CD8-positive, alpha-beta T cell (primary cell): ENCODE measurements at regions of chr3 and their contacts with region 1.

Region 1: GRCh38 chr3:52231502-52232293 is 6.3 kb upstream of the TLR9 start:
- DNase-seq: peak; percentile 79 to 97 (median 89)
- ATAC-seq: peak; percentile 87
- H3K4me3 ChIP-seq: no peak overlapping the region
- H3K4me3 Mint-ChIP-seq: peak overlapping the region; percentile 42
- H3K27ac ChIP-seq: peak overlapping the region in 1 of 2 experiments; percentile 17
- H3K27ac Mint-ChIP-seq: peak overlapping the region; percentile 90
- H3K4me1 ChIP-seq: peaks cover 61% of the 10 kb centered on the region
- H3K4me1 Mint-ChIP-seq: peaks cover 64% of the 10 kb centered on the region
- H3K27me3 ChIP-seq: no peaks in the 10 kb centered on the region
- H3K27me3 Mint-ChIP-seq: no peaks in the 10 kb centered on the region
- CTCF ChIP-seq: peak; percentile 92

Region 2: DNA sequence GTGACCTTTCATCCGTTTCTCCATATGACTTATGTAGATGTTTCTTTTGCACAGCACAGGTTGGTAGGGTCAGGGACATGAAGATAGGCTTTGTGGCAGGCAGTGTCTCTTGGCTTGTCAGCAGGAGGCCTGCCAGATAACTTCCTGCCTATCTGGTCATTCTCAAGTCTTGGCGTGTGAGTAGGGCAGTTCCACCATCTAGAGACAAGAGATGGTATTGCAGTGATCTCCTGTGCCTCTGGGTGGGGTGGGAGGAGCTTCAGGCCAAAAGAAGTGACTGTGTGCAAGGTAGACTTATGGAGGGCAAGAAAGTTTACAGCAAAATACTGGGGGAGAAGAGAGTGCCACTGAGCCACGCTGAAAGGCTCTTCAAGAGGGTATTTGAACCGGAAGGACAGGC is 549.6 kb before region 1 on chr3:
- CTCF ChIA-PET with region 1: no interaction called
- POLR2A ChIA-PET with region 1: no interaction called
- intact Hi-C with region 1: no loop called
- DNase-seq: peak; percentile 59 to 93 (median 71)
- ATAC-seq: peak; percentile 86
- H3K4me3 ChIP-seq: peak overlapping the region; percentile 24 to 27
- H3K4me3 Mint-ChIP-seq: peak overlapping the region; percentile 72
- H3K27ac ChIP-seq: peak overlapping the region; percentile 17 to 64
- H3K27ac Mint-ChIP-seq: peak overlapping the region; percentile 52
- H3K4me1 ChIP-seq: peaks cover 96% of the 10 kb centered on the region
- H3K4me1 Mint-ChIP-seq: peaks cover 91% of the 10 kb centered on the region
- H3K27me3 ChIP-seq: no peaks in the 10 kb centered on the region
- H3K27me3 Mint-ChIP-seq: no peaks in the 10 kb centered on the region
- CTCF ChIP-seq: peak; percentile 85

Region 3: GRCh38 chr3:52253314-52254304 is 21.9 kb after region 1 on chr3:
- CTCF ChIA-PET with region 1: interaction called, 54 read pairs
- POLR2A ChIA-PET with region 1: interaction called, 160 read pairs
- intact Hi-C with region 1: no loop called
- DNase-seq: peak; percentile 70 to 97 (median 87)
- ATAC-seq: peak; percentile 86
- H3K4me3 ChIP-seq: peak overlapping the region; percentile 25 to 32
- H3K4me3 Mint-ChIP-seq: peak overlapping the region; percentile 84
- H3K27ac ChIP-seq: peak overlapping the region; percentile 76 to 92
- H3K27ac Mint-ChIP-seq: peak overlapping the region; percentile 100
- H3K4me1 ChIP-seq: peaks cover 96% of the 10 kb centered on the region
- H3K4me1 Mint-ChIP-seq: peaks cover 93% of the 10 kb centered on the region
- H3K27me3 ChIP-seq: no peaks in the 10 kb centered on the region
- H3K27me3 Mint-ChIP-seq: no peaks in the 10 kb centered on the region
- CTCF ChIP-seq: no peak

Region 4: GRCh38 chr3:52270252-52270754 is 38.6 kb after region 1 on chr3:
- CTCF ChIA-PET with region 1: interaction called, 622 read pairs
- POLR2A ChIA-PET with region 1: interaction called, 685 read pairs
- intact Hi-C with region 1: no loop called
- DNase-seq: no peak
- ATAC-seq: no peak
- H3K4me3 ChIP-seq: peak overlapping the region in 1 of 2 experiments; percentile 10
- H3K4me3 Mint-ChIP-seq: peak overlapping the region; percentile 82
- H3K27ac ChIP-seq: peak overlapping the region; percentile 34 to 68
- H3K27ac Mint-ChIP-seq: peak overlapping the region; percentile 95
- H3K4me1 ChIP-seq: peaks cover 73% of the 10 kb centered on the region
- H3K4me1 Mint-ChIP-seq: peaks cover 86% of the 10 kb centered on the region
- H3K27me3 ChIP-seq: no peaks in the 10 kb centered on the region
- H3K27me3 Mint-ChIP-seq: no peaks in the 10 kb centered on the region
- CTCF ChIP-seq: no peak

Region 5: GRCh38 chr3:52291508-52292181 is 59.9 kb after region 1 on chr3:
- CTCF ChIA-PET with region 1: interaction called, 622 read pairs
- POLR2A ChIA-PET with region 1: interaction called, 685 read pairs
- intact Hi-C with region 1: loop called in 1 of 2 experiments (anchors 2 kb)
- DNase-seq: peak in 7 of 9 experiments; percentile 33 to 70 (median 60)
- ATAC-seq: peak; percentile 32
- H3K4me3 ChIP-seq: no peak overlapping the region
- H3K4me3 Mint-ChIP-seq: peak overlapping the region; percentile 37
- H3K27ac ChIP-seq: no peak overlapping the region
- H3K27ac Mint-ChIP-seq: no peak overlapping the region
- H3K4me1 ChIP-seq: peaks cover 33% of the 10 kb centered on the region
- H3K4me1 Mint-ChIP-seq: peaks cover 37% of the 10 kb centered on the region
- H3K27me3 ChIP-seq: no peaks in the 10 kb centered on the region
- H3K27me3 Mint-ChIP-seq: no peaks in the 10 kb centered on the region
- CTCF ChIP-seq: peak; percentile 49

Region 6: GRCh38 chr3:52323526-52324295 is 92.0 kb after region 1 on chr3:
- CTCF ChIA-PET with region 1: interaction called, 16 read pairs
- POLR2A ChIA-PET with region 1: no interaction called
- intact Hi-C with region 1: no loop called
- DNase-seq: no peak
- ATAC-seq: no peak
- H3K4me3 ChIP-seq: no peak overlapping the region
- H3K4me3 Mint-ChIP-seq: no peak overlapping the region
- H3K27ac ChIP-seq: no peak overlapping the region
- H3K27ac Mint-ChIP-seq: no peak overlapping the region
- H3K4me1 ChIP-seq: no peaks in the 10 kb centered on the region
- H3K4me1 Mint-ChIP-seq: no peaks in the 10 kb centered on the region
- H3K27me3 ChIP-seq: no peaks in the 10 kb centered on the region
- H3K27me3 Mint-ChIP-seq: no peaks in the 10 kb centered on the region
- CTCF ChIP-seq: no peak